Right lobe of liver (tissue), 6 donors: ENCODE measurements at regions of chr12 and their contacts with region 1.

Region 1: GRCh38 chr12:60930151-60930550 is 1330.1 kb upstream of the USP15 start:
- DNase-seq: no peak
- ATAC-seq: no peak
- H3K4me3 ChIP-seq: no peak overlapping the region
- H3K27ac ChIP-seq: no peak overlapping the region
- H3K4me1 ChIP-seq: no peaks in the 10 kb centered on the region
- H3K27me3 ChIP-seq: no peaks in the 10 kb centered on the region
- CTCF ChIP-seq: no peak
- POLR2A ChIP-seq: no peak

Region 2: DNA sequence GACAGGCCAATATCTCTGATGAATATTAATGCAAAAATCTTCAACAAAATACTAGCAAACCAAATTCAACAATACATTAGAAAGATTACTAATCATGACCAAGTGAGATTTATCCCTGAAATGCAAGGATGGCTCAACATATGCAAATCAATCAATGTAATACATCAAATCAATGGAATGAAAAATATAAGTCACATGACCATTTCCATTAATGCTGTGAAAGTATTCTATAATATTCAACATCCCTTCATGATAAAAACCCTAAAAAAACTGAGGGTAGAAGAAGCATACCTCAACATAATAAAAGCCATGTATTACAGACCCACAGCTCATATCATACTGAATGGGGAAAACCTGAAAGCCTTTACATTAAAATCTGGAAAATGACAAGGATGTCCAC is 50.3 kb before region 1 on chr12:
- intact Hi-C with region 1: loop called in 1 of 2 experiments (anchors 5 kb)
- DNase-seq: no peak
- ATAC-seq: no peak
- H3K4me3 ChIP-seq: no peak overlapping the region
- H3K27ac ChIP-seq: no peak overlapping the region
- H3K4me1 ChIP-seq: no peaks in the 10 kb centered on the region
- H3K27me3 ChIP-seq: no peaks in the 10 kb centered on the region
- CTCF ChIP-seq: no peak
- POLR2A ChIP-seq: no peak

Region 3: GRCh38 chr12:60995256-60995818 is 65.2 kb after region 1 on chr12:
- intact Hi-C with region 1: no loop called
- DNase-seq: no peak
- ATAC-seq: peak in 1 of 4 donors; percentile 67
- H3K4me3 ChIP-seq: no peak overlapping the region
- H3K27ac ChIP-seq: no peak overlapping the region
- H3K4me1 ChIP-seq: no peaks in the 10 kb centered on the region
- H3K27me3 ChIP-seq: no peaks in the 10 kb centered on the region
- CTCF ChIP-seq: no peak
- POLR2A ChIP-seq: no peak

Region 4: DNA sequence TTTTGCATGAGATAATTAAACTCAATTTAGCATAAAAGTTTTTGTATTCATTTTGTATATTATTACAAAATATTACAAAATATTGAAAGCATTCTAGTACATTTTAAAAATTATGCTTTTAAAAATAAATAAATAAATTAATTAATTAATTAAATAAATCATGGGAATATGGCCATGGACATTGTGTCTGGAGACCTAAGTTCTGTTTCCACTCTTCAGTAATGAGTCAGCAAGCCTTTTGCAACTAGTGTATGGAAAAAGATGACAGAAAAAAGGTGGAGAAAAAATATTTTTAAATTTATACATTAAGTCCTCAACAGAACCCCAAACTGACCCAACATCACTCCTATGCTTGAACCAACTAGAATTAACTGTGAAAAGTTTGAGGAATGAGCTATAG is 142.6 kb after region 1 on chr12:
- intact Hi-C with region 1: no loop called
- DNase-seq: no peak
- ATAC-seq: no peak
- H3K4me3 ChIP-seq: no peak overlapping the region
- H3K27ac ChIP-seq: no peak overlapping the region
- H3K4me1 ChIP-seq: no peaks in the 10 kb centered on the region
- H3K27me3 ChIP-seq: no peaks in the 10 kb centered on the region
- CTCF ChIP-seq: no peak
- POLR2A ChIP-seq: no peak